Ovary (tissue), 10 donors: ENCODE measurements at regions of chr16 and their contacts with region 1.

Region 1: GRCh38 chr16:68229431-68230198 is 6.3 kb downstream of the ESRP2 start:
- DNase-seq: peak in 4 of 5 donors; percentile 28 to 62 (median 48)
- H3K4me3 ChIP-seq: no peak overlapping the region
- H3K27ac ChIP-seq: no peak overlapping the region
- H3K4me1 ChIP-seq: peaks cover 2% of the 10 kb centered on the region
- H3K27me3 ChIP-seq: no peaks in the 10 kb centered on the region
- CTCF ChIP-seq: peak; percentile 74 to 81 (median 76)
- EP300 ChIP-seq: no peak
- POLR2A ChIP-seq: no peak

Region 2: DNA sequence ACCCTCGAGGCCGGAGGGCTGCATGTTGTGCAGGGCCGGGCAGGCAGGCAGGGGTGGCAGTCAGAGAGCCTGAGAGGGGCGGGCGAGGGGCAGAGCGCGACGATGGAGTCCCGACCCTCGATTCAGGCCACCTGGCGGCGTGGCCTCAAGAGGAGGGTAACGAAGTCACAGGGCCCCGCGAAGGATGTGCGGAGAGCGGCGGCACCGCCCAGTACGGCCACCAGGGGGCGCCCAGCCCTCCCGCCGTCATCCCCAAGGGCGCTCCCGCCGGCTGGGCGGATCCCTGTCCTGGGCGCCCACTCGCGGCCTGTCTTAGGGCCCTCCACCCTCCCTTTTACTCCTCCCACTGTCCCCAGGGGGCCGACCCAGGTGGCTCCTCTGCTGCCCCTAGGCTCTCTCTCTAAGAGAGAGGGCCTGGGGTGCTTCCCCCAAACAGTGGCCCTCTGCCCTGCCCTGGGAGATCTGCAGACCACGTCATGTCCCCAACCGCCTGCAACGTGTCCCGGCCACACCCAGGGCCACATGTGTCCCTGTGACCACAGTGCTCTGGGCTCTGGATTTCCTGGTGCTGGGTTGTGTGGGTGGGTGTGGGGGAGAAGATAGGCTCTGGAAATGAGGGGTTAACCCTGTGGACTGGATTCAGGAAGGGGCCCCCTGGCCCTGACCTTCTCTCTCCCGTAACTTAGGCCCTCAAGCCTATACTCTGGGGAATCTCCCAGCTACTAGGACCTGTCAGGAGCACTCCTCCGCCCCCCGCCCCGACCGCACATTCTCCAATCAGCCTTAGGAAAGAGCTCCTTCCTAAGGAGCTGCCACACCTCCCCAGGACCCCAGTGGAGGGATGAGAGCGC is 236.2 kb before region 1 on chr16:
- intact Hi-C with region 1: loop called in 3 of 4 experiments (anchors 2 to 5 kb)
- DNase-seq: peak; percentile 75 to 87 (median 80)
- H3K4me3 ChIP-seq: no peak overlapping the region
- H3K27ac ChIP-seq: no peak overlapping the region
- H3K4me1 ChIP-seq: peaks cover 2% of the 10 kb centered on the region
- H3K27me3 ChIP-seq: no peaks in the 10 kb centered on the region
- CTCF ChIP-seq: peak; percentile 94 to 96 (median 95)
- EP300 ChIP-seq: no peak
- POLR2A ChIP-seq: no peak

Region 3: GRCh38 chr16:68074850-68075555 is 154.6 kb before region 1 on chr16:
- intact Hi-C with region 1: loop called in 2 of 4 experiments (anchors 10 kb)
- DNase-seq: no peak
- H3K4me3 ChIP-seq: no peak overlapping the region
- H3K27ac ChIP-seq: no peak overlapping the region
- H3K4me1 ChIP-seq: peaks cover 14% of the 10 kb centered on the region
- H3K27me3 ChIP-seq: no peaks in the 10 kb centered on the region
- CTCF ChIP-seq: no peak
- EP300 ChIP-seq: no peak
- POLR2A ChIP-seq: no peak

Region 4: GRCh38 chr16:68093816-68094613 is 135.6 kb before region 1 on chr16:
- intact Hi-C with region 1: loop called in 3 of 4 experiments (anchors 10 kb)
- DNase-seq: no peak
- H3K4me3 ChIP-seq: no peak overlapping the region
- H3K27ac ChIP-seq: no peak overlapping the region
- H3K4me1 ChIP-seq: no peaks in the 10 kb centered on the region
- H3K27me3 ChIP-seq: no peaks in the 10 kb centered on the region
- CTCF ChIP-seq: peak in 1 of 3 donors; percentile 20
- EP300 ChIP-seq: no peak
- POLR2A ChIP-seq: no peak

Region 5: GRCh38 chr16:68298907-68299561 is 69.4 kb after region 1 on chr16:
- intact Hi-C with region 1: no loop called
- DNase-seq: peak in 2 of 5 donors; percentile 32 to 49
- H3K4me3 ChIP-seq: no peak overlapping the region
- H3K27ac ChIP-seq: no peak overlapping the region
- H3K4me1 ChIP-seq: peaks cover 5% of the 10 kb centered on the region
- H3K27me3 ChIP-seq: no peaks in the 10 kb centered on the region
- CTCF ChIP-seq: no peak
- EP300 ChIP-seq: no peak
- POLR2A ChIP-seq: no peak